Activated CD4-positive, alpha-beta T cell treated with anti-CD3 and anti-CD28 coated beads for 36 hours (primary cell): ENCODE measurements at regions of chr1 and their contacts with region 1.

Region 1: GRCh38 chr1:88655685-88656299 is 28.3 kb upstream of the PKN2 start:
- DNase-seq: no peak
- ATAC-seq: no peak
- H3K4me3 Mint-ChIP-seq: no peak overlapping the region
- H3K27ac Mint-ChIP-seq: no peak overlapping the region
- H3K4me1 Mint-ChIP-seq: peaks cover 12% of the 10 kb centered on the region
- H3K27me3 Mint-ChIP-seq: no peaks in the 10 kb centered on the region

Region 2: DNA sequence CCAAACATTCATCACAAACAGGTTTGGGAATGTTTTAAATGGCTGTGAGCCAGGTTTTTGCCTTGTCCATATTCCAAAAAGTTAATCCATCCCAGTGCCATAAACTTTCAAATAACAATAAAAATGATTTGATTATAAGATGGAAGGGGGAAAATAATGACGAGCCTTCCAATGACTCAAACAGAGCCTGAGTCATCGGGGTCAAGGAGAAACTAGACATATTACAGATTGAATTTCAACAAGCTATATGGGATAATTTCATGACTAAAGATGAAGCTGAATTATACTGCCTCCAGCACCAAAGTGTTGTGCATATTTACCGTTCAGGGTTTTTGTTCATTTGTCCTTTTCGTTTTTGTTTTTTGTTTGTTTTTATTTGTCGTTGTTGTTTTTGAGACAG is 167.5 kb before region 1 on chr1:
- CTCF ChIA-PET with region 1: no interaction called
- POLR2A ChIA-PET with region 1: no interaction called
- intact Hi-C with region 1: no loop called
- DNase-seq: no peak
- ATAC-seq: no peak
- H3K4me3 Mint-ChIP-seq: no peak overlapping the region
- H3K27ac Mint-ChIP-seq: no peak overlapping the region
- H3K4me1 Mint-ChIP-seq: no peaks in the 10 kb centered on the region
- H3K27me3 Mint-ChIP-seq: peaks cover 7% of the 10 kb centered on the region

Region 3: DNA sequence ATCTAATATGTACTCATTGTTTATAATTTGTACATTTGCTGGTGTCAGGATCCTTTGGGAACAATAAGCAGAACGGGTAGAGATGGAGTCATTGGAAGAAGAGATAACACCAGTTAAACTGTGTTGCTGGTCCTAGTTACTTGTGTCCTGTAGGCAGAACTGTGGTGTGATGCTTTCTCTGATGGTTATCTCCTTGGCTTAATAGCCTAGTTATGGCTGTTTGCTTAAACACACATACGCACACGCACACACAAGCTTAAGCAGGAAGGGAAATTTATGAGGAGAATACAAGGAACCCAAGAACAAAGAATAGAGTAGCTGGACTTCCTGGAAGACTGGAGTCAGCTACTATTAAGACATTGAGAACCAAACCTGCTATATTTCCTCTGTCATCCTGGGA is 22.6 kb after region 1 on chr1:
- CTCF ChIA-PET with region 1: interaction called, 14 read pairs
- POLR2A ChIA-PET with region 1: no interaction called
- intact Hi-C with region 1: no loop called
- DNase-seq: no peak
- ATAC-seq: no peak
- H3K4me3 Mint-ChIP-seq: no peak overlapping the region
- H3K27ac Mint-ChIP-seq: no peak overlapping the region
- H3K4me1 Mint-ChIP-seq: peaks cover 7% of the 10 kb centered on the region
- H3K27me3 Mint-ChIP-seq: no peaks in the 10 kb centered on the region

Region 4: DNA sequence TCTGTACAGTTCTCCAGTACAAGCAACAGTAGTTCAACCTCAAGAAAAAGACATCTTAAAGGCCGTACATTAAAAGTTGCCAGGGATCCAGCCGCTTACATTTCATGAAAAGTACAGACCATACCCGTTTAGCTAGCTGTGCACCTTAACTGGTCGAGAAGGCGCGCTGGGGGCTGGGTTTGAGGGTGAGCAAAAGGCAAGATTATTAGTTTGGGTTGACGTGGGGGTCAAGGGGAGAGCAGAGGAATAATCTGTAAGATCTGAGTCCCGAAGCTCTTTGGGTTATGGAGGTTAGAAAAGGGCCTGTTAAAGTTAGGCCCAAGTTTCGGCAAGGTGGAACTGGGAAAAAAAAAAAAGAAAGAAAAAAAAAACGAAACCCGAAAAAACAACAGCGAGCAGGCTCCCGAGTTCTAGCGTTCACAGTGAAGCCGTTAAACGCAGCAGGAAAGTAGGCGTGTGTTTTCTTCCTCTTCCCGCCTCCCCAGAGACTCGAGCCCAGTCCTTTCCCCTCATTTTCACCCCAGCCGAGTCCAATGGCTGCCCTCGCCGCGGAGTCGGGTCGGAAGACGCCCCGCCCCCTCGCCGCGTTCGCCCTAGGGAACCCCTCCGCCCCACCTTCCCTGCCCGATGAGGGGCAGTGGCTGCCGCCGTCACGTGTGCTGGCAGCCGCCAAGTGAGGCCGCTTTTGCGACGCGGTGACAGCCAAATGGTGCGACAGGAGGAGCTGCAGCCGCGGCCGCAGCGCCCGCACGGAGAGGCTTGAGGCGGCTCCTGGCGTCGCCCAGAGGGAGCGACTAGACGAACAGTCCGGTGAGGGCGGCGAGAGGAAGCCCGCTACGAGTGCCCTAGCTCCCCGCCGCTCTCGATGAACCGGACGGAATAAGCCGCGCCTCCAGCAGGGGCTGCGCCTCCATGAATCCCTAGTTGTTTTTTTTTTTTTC is 28.0 kb after region 1 on chr1 and contains the start of gene PKN2:
- CTCF ChIA-PET with region 1: interaction called, 11 read pairs
- POLR2A ChIA-PET with region 1: interaction called, 4 read pairs
- intact Hi-C with region 1: loop called in 1 of 2 experiments (anchors 1 kb)
- DNase-seq: peak; percentile 99
- ATAC-seq: peak; percentile 96
- H3K4me3 Mint-ChIP-seq: peak within 1 kb of the TSS; percentile 94
- H3K27ac Mint-ChIP-seq: peak within 1 kb of the TSS; percentile 99
- H3K4me1 Mint-ChIP-seq: peaks cover 21% of the 10 kb centered on the region
- H3K27me3 Mint-ChIP-seq: no peaks in the 10 kb centered on the region
- total RNA-seq, gene PKN2: 16.4 to 24.9 TPM

Region 5: GRCh38 chr1:88708021-88708420 is 52.2 kb after region 1 on chr1:
- CTCF ChIA-PET with region 1: no interaction called
- POLR2A ChIA-PET with region 1: no interaction called
- intact Hi-C with region 1: loop called in 1 of 2 experiments (anchors 5 kb)
- DNase-seq: no peak
- ATAC-seq: no peak
- H3K4me3 Mint-ChIP-seq: no peak overlapping the region
- H3K27ac Mint-ChIP-seq: no peak overlapping the region
- H3K4me1 Mint-ChIP-seq: peaks cover 8% of the 10 kb centered on the region
- H3K27me3 Mint-ChIP-seq: no peaks in the 10 kb centered on the region

Region 6: GRCh38 chr1:88800382-88801051 is 144.7 kb after region 1 on chr1:
- CTCF ChIA-PET with region 1: interaction called, 3 read pairs
- POLR2A ChIA-PET with region 1: no interaction called
- intact Hi-C with region 1: loop called (anchors 5 kb)
- DNase-seq: peak; percentile 59
- ATAC-seq: peak; percentile 76
- H3K4me3 Mint-ChIP-seq: no peak overlapping the region
- H3K27ac Mint-ChIP-seq: peak overlapping the region; percentile 39
- H3K4me1 Mint-ChIP-seq: peaks cover 4% of the 10 kb centered on the region
- H3K27me3 Mint-ChIP-seq: no peaks in the 10 kb centered on the region

Region 7: GRCh38 chr1:88910401-88910800 is 254.6 kb after region 1 on chr1:
- CTCF ChIA-PET with region 1: no interaction called
- POLR2A ChIA-PET with region 1: no interaction called
- intact Hi-C with region 1: no loop called
- DNase-seq: no peak
- ATAC-seq: no peak
- H3K4me3 Mint-ChIP-seq: no peak overlapping the region
- H3K27ac Mint-ChIP-seq: no peak overlapping the region
- H3K4me1 Mint-ChIP-seq: peaks cover 15% of the 10 kb centered on the region
- H3K27me3 Mint-ChIP-seq: no peaks in the 10 kb centered on the region